ENCODE measurements at regions of chr6 and their contacts with region 1.

Region 1: GRCh38 chr6:30821862-30822782 is 62.2 kb upstream of the DDR1 start:
- DNase-seq: peak in 1 of 2 experiments; percentile 44
- H3K4me3 ChIP-seq: no peak overlapping the region
- H3K4me3 Mint-ChIP-seq: peak overlapping the region; percentile 65
- H3K27ac Mint-ChIP-seq: peak overlapping the region; percentile 94
- H3K4me1 ChIP-seq: peaks cover 50% of the 10 kb centered on the region
- H3K4me1 Mint-ChIP-seq: peaks cover 42% of the 10 kb centered on the region
- H3K27me3 ChIP-seq: no peaks in the 10 kb centered on the region
- H3K27me3 Mint-ChIP-seq: no peaks in the 10 kb centered on the region
- CTCF ChIP-seq: peak; percentile 28 to 53

Region 2: GRCh38 chr6:30769088-30769852 is 52.9 kb before region 1 on chr6:
- CTCF ChIA-PET with region 1: interaction called, 4 read pairs
- POLR2A ChIA-PET with region 1: interaction called, 3 read pairs
- intact Hi-C with region 1: loop called (anchors 2 kb)
- DNase-seq: peak; percentile 87 to 92
- H3K4me3 ChIP-seq: peak overlapping the region; percentile 25
- H3K4me3 Mint-ChIP-seq: peak overlapping the region; percentile 95
- H3K27ac Mint-ChIP-seq: peak overlapping the region; percentile 100
- H3K4me1 ChIP-seq: peaks cover 47% of the 10 kb centered on the region
- H3K4me1 Mint-ChIP-seq: peaks cover 35% of the 10 kb centered on the region
- H3K27me3 ChIP-seq: no peaks in the 10 kb centered on the region
- H3K27me3 Mint-ChIP-seq: no peaks in the 10 kb centered on the region
- CTCF ChIP-seq: no peak

Region 3: DNA sequence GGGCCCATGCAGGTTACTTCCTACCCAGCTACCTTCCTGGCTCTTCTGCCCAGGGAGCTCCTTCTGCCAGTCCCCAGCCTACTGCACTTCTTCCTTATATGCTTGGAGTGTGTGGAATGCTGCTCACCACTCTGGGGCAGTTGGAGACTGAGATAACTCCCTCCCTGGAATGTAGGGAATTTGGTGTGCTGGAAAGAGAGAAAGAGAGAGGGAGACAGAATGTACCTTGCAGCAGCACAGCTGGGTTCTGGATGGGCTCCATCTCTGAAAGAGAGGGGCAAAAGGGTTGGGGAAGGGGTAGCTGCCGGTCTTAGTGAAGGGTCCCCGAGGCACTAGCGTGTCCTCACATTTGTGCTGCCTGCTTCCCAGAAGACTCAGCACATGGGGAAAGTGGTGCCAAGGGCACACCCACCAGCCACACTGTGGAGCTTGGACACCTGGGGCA is 22.0 kb after region 1 on chr6:
- CTCF ChIA-PET with region 1: interaction called, 28 read pairs
- POLR2A ChIA-PET with region 1: interaction called, 4 read pairs
- intact Hi-C with region 1: no loop called
- DNase-seq: peak; percentile 69 to 81
- H3K4me3 ChIP-seq: no peak overlapping the region
- H3K4me3 Mint-ChIP-seq: peak overlapping the region; percentile 13
- H3K27ac Mint-ChIP-seq: peak overlapping the region; percentile 79
- H3K4me1 ChIP-seq: peaks cover 49% of the 10 kb centered on the region
- H3K4me1 Mint-ChIP-seq: peaks cover 36% of the 10 kb centered on the region
- H3K27me3 ChIP-seq: no peaks in the 10 kb centered on the region
- H3K27me3 Mint-ChIP-seq: no peaks in the 10 kb centered on the region
- CTCF ChIP-seq: peak in 1 of 2 experiments; percentile 28

Region 4: DNA sequence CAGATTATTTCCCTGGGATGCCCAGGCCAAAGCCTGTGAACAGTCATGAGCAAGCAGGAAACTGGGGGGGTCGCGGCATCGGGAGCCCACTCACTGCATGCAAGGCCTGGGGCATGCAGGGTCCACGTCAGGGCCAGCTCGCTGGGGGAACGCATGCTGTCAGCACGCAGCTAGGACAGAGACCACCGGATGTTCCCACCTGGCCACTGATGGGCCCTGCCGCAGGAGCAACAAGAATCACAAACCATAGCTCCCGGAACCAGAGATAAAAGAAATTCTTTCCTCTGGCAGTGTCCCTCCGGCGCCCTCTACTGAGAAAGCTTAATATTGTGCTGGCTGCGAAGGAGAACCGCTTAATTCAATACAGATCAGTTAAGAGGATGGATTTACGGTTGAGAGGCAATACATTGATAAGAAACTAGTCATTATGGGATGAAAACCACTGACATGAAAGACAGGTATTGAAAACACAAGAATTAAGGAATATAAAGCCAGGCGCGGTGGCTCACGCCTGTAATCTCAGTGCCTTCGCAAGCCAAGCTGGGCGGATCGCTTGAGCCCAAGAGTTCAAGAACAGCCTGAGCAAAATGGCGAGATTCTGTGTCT is 257.6 kb after region 1 on chr6:
- CTCF ChIA-PET with region 1: interaction called, 11 read pairs
- POLR2A ChIA-PET with region 1: no interaction called
- intact Hi-C with region 1: no loop called
- DNase-seq: peak; percentile 71 to 78
- H3K4me3 ChIP-seq: no peak overlapping the region
- H3K4me3 Mint-ChIP-seq: no peak overlapping the region
- H3K27ac Mint-ChIP-seq: no peak overlapping the region
- H3K4me1 ChIP-seq: 0 out of 2 replicates have a peak, but pooled peaks cover 5% of the 10 kb centered on the region
- H3K4me1 Mint-ChIP-seq: peaks cover 8% of the 10 kb centered on the region
- H3K27me3 ChIP-seq: no peaks in the 10 kb centered on the region
- H3K27me3 Mint-ChIP-seq: peaks cover 5% of the 10 kb centered on the region
- CTCF ChIP-seq: peak; percentile 63 to 82

Region 5: DNA sequence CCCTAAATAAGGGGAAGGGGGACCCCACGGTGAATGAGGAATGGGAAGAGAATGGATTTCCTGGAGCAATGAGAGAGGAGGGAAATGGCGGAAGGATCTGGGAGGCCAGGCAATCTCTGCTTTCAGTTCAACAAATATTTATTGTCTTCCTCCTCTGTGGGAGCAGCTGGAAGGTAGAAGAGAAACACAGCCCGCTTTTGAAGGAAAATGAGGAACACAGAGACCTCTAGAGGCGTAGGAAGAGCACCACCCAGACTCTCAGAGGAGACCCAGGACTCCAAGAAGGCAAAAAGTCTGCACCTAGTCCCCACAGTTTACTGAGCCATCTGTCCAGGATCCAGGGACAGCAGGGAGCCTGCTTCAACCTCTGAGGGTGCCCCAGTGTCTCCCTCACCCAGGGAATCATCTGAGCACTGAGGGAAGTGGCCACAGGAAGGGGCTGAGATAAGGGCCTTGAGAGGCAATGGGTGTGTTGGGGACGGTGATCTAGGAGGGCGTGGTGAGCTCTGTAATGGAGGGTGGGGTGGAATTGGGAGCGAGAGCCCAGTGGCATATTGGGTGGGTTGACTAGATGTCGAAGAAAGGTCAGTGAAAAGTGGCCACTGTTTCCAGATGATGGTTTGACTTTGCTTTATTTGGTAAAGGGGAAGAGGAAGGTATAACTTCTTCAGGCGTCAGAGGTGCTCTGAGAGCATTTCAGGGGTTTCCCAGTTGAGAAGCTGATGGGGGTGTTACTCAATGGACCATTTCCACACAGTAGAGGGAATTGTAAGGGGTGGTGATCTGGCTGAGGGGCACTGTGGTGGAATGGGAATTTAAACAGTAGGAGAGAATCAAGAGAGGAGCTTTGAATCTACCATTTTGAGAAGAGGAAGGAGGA is 293.1 kb after region 1 on chr6:
- CTCF ChIA-PET with region 1: no interaction called
- POLR2A ChIA-PET with region 1: no interaction called
- intact Hi-C with region 1: no loop called
- DNase-seq: no peak
- H3K4me3 ChIP-seq: no peak overlapping the region
- H3K4me3 Mint-ChIP-seq: peak overlapping the region; percentile 12
- H3K27ac Mint-ChIP-seq: peak overlapping the region; percentile 83
- H3K4me1 ChIP-seq: peaks cover 31% of the 10 kb centered on the region
- H3K4me1 Mint-ChIP-seq: peaks cover 23% of the 10 kb centered on the region
- H3K27me3 ChIP-seq: no peaks in the 10 kb centered on the region
- H3K27me3 Mint-ChIP-seq: no peaks in the 10 kb centered on the region
- CTCF ChIP-seq: peak in 1 of 2 experiments; percentile 9

Region 6: DNA sequence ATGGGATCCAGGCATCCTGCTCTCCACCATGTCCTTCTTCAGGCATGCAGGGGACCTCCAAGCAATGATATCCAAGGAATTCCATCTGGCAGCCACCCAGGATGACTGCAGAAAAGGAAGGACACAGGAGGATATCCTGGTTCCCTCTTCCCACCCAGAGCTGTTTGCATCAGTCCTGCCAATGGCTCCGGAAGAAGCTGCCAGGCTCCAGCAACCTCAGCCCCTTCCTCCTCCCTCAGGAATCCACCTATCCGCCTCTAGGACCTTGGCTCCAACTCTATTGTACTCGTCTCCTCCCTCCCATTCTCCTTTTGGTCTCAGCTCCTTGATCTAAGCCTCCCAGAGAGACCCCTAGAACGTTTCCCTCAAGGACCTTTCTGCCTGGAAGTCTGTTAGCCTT is 317.5 kb after region 1 on chr6:
- CTCF ChIA-PET with region 1: no interaction called
- POLR2A ChIA-PET with region 1: interaction called, 11 read pairs
- intact Hi-C with region 1: no loop called
- DNase-seq: no peak
- H3K4me3 ChIP-seq: no peak overlapping the region
- H3K4me3 Mint-ChIP-seq: no peak overlapping the region
- H3K27ac Mint-ChIP-seq: no peak overlapping the region
- H3K4me1 ChIP-seq: 0 out of 2 replicates have a peak, but pooled peaks cover 3% of the 10 kb centered on the region
- H3K4me1 Mint-ChIP-seq: peaks cover 13% of the 10 kb centered on the region
- H3K27me3 ChIP-seq: no peaks in the 10 kb centered on the region
- H3K27me3 Mint-ChIP-seq: no peaks in the 10 kb centered on the region
- CTCF ChIP-seq: no peak